GM10248 (cell line): ENCODE measurements at regions of chr11 and their contacts with region 1.

Region 1: GRCh38 chr11:75797792-75798191 is 17.2 kb upstream of the UVRAG start:
- DNase-seq: no peak
- CTCF ChIP-seq: no peak

Region 2: DNA sequence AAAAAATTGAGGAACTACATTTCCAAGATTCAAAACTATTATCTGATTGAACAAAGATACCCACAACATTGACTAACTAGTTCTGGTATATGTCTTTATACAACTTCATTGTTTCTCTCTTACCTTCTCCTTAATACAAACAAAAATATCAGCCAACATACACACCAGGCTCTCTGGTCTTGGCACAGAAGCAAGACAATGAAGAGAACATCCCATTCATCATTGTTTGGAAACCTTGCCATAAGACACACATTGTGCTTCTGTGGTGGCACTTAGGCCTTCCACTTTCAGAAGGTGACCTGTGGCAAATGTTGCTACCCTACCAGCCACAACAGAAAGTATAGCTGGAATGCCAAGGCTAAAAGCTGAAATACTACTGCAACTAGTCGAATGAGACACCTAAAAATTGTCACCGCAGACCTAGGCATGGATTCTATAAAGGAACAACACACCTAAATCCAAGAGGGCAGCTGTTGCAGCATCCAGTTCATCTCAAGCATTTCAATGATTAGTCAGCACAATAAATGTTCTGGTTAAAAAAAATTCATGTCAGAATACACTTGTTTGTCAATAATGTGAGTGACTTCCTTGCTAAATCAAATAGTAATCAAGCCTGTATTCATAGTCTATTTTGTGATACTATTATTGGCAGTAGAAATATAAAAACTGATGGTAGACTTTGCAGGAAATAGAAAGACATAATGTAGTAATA is 155.2 kb before region 1 on chr11:
- CTCF ChIA-PET with region 1: no interaction called
- POLR2A ChIA-PET with region 1: interaction called, 13 read pairs
- DNase-seq: no peak
- CTCF ChIP-seq: no peak